ENCODE measurements at regions of chr11 and their contacts with region 1.

Region 1: DNA sequence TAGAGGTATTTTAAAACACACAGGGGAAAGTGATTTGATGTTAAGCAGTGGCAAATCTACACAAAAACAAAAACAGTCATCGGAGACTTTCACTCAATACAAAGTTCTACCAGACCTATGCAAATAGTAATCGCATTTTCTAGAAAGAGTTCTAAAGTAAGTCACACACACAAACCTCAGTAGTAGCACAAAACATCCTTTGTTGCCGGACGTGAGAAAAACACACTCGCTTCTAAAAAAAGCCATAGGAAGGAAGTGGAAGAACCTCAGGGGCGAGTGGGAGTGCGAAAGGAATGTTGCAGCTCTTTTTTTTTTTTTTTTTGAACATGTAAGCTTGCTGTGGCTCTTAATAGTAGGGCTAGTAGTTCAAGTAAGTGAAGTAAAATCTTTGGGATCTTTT is 88.9 kb downstream of the MAML2 start:
- DNase-seq: no peak
- H3K4me3 Mint-ChIP-seq: peak overlapping the region; percentile 70
- H3K27ac Mint-ChIP-seq: peak overlapping the region; percentile 83
- H3K4me1 Mint-ChIP-seq: peaks cover 76% of the 10 kb centered on the region
- H3K27me3 Mint-ChIP-seq: no peaks in the 10 kb centered on the region

Region 2: DNA sequence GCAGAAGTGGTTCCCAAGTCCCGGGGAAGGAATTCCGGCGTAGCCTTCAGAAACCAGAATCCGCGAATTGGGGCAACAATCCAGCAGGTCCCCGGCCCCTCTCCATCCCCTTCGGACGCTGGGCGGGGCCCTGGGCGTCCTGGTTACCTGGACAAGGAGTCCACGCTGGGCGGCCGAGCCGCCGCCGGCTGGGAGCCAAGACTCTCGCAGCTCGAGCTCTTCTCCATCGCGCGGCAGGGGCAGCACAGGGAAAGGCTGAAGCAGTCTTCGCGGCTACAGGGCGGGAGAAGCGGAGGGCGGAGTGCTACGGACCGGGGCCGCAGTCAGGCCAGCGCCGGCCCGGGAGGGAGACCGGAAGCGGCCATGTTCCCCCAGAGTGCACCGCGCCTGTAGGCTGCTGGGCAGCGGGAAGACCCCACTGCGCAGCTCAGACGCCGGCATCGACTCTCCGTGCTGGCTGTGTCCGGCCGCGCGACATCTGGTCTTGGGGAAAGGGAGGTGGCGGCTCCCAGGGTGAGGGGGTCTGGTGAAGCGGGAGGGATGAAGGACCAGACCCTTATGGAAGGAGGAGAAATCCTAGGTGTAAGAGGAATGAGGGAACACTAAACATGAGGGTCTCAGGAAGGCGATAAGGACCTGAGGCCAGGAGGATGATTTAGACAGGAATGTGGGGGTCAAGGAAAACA is 330.2 kb before region 1 on chr11 and contains the start of gene MTMR2:
- intact Hi-C with region 1: loop called (anchors 10 kb)
- DNase-seq: peak; percentile 39
- H3K4me3 Mint-ChIP-seq: peak within 1 kb of the TSS; percentile 100
- H3K27ac Mint-ChIP-seq: peak within 1 kb of the TSS; percentile 99
- H3K4me1 Mint-ChIP-seq: peaks cover 23% of the 10 kb centered on the region
- H3K27me3 Mint-ChIP-seq: peaks cover 6% of the 10 kb centered on the region
- total RNA-seq, gene MTMR2: 41.7 and 45.4 TPM in 2 replicates

Region 3: DNA sequence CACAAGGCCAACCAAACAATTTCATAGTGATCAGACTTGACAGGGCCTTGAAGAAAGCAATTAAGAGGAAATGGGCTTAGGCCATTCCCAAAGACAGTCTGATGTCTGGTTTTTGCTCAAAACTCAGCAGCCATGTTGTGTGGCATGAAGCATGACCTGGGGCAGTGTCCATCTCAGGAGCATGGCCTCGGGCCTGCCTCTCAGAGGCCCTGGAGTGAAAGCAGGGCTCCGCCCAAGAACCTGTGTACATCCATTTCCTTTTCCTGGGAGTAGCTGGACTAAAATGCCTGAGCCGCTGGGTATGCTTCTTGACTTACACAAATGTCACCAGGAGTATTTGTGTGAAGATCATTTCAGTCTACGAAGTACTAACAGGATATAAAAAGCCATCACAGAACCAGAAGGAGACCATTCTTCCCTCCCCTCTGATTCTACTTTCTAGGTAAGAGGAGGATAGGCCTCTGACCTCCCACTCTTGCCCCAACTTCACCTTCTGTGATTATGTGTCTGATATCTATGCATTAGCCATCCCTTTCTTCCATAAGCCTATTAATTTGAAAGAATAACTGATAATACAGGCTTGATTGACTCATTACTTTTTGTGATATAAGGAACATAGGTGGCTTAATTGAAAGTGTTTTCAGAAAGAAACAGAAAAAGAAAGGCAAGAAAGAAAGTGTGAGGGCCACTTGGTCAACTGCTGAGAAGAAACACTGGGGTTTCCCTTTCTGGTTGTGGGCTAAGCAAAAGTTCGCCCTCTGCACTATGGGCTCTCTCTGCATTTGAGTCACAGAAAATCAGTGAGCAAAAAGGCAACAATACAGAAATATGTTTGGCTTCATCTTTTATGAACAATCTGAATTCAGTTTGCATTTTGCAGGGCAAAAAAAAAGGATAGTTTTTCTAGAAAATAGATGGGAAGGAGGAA is 141.6 kb before region 1 on chr11:
- intact Hi-C with region 1: loop called (anchors 5 kb)
- DNase-seq: no peak
- H3K4me3 Mint-ChIP-seq: peak overlapping the region; percentile 37
- H3K27ac Mint-ChIP-seq: peak overlapping the region; percentile 79
- H3K4me1 Mint-ChIP-seq: peaks cover 32% of the 10 kb centered on the region
- H3K27me3 Mint-ChIP-seq: no peaks in the 10 kb centered on the region

Region 4: DNA sequence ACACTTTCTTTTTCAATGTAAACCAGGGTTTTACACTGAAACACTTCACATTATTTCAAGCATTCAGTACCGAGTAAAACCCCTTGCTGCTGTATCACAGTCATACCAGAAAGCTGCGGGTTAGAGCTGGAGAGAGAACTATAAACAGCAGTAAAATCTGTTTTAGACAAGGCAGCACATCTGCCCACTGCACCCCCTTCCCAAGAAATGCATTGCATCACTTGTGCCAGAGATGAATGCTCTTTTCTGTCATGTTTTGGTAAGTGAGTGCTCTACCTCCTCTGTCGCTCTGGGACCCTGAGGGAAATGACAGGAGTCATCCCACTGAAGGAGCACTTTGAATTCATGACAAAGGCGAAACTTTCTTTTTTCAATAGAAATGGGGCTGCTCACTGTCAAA is 18.3 kb before region 1 on chr11:
- intact Hi-C with region 1: loop called (anchors 1 kb)
- DNase-seq: peak; percentile 52
- H3K4me3 Mint-ChIP-seq: peak overlapping the region; percentile 65
- H3K27ac Mint-ChIP-seq: peak overlapping the region; percentile 89
- H3K4me1 Mint-ChIP-seq: peaks cover 36% of the 10 kb centered on the region
- H3K27me3 Mint-ChIP-seq: no peaks in the 10 kb centered on the region

Region 5: DNA sequence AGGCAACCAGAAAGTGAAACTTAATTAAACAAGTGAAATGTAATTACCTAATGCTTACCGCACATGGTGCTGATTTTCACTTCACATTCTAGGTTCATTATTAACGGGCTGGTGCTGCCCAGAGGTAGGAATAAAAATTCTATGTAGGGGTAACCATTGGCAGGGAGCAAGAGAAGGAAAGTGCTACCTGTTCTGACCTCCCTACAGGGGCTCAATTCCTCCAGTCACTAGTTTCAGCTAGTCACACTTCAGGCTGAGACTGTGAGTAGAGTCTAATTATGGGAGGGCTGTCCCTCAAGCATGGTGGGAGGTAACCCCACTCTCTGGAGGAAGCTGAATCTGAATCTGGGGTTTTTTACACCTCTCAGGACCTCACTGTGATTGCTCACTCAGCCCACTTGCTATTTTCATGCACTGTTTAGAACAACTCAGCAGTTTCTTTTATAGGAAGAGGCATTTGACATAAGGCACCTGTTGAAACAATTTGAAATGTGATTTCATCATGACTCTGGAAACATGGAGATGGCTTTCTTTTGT is 13.5 kb after region 1 on chr11:
- intact Hi-C with region 1: loop called (anchors 1 kb)
- DNase-seq: no peak
- H3K4me3 Mint-ChIP-seq: no peak overlapping the region
- H3K27ac Mint-ChIP-seq: peak overlapping the region; percentile 72
- H3K4me1 Mint-ChIP-seq: peaks cover 61% of the 10 kb centered on the region
- H3K27me3 Mint-ChIP-seq: no peaks in the 10 kb centered on the region

Region 6: DNA sequence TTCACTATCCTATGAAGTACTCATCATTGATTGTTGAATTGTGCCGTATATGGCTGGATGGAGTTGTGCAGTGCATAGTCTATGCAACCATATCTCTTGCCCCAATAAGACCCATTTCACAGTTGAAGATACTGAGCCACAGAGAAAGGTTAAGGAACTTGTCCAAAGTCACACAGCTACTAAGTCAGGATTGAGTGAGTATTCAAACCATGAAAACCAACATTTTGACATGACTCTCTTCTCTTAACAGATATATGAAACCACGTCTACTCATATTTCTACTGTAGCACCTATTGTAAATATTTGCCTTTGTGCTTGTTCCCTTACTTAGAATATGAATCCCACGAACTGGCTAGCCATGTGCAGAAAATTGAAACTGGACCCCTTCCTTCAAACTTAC is 30.8 kb after region 1 on chr11:
- intact Hi-C with region 1: loop called (anchors 2 kb)
- DNase-seq: no peak
- H3K4me3 Mint-ChIP-seq: no peak overlapping the region
- H3K27ac Mint-ChIP-seq: peak overlapping the region; percentile 64
- H3K4me1 Mint-ChIP-seq: peaks cover 52% of the 10 kb centered on the region
- H3K27me3 Mint-ChIP-seq: no peaks in the 10 kb centered on the region

Region 7: GRCh38 chr11:96389720-96390487 is 135.8 kb after region 1 on chr11 and contains the starts of genes CCDC82 and JRKL:
- intact Hi-C with region 1: loop called (anchors 5 kb)
- DNase-seq: peak; percentile 96
- H3K4me3 Mint-ChIP-seq: peak within 1 kb of the TSS; percentile 94
- H3K27ac Mint-ChIP-seq: peak within 1 kb of the TSS; percentile 86
- H3K4me1 Mint-ChIP-seq: peaks cover 50% of the 10 kb centered on the region
- H3K27me3 Mint-ChIP-seq: no peaks in the 10 kb centered on the region
- total RNA-seq, gene CCDC82: 35.4 and 38.6 TPM in 2 replicates
- total RNA-seq, gene JRKL: 11.8 and 12.9 TPM in 2 replicates

Region 8: GRCh38 chr11:96694338-96694737 is 440.3 kb after region 1 on chr11:
- intact Hi-C with region 1: no loop called
- DNase-seq: no peak
- H3K4me3 Mint-ChIP-seq: no peak overlapping the region
- H3K27ac Mint-ChIP-seq: no peak overlapping the region
- H3K4me1 Mint-ChIP-seq: no peaks in the 10 kb centered on the region
- H3K27me3 Mint-ChIP-seq: no peaks in the 10 kb centered on the region